SK-MEL-5 (cell line): ENCODE measurements at regions of chr17 and their contacts with region 1.

Region 1: DNA sequence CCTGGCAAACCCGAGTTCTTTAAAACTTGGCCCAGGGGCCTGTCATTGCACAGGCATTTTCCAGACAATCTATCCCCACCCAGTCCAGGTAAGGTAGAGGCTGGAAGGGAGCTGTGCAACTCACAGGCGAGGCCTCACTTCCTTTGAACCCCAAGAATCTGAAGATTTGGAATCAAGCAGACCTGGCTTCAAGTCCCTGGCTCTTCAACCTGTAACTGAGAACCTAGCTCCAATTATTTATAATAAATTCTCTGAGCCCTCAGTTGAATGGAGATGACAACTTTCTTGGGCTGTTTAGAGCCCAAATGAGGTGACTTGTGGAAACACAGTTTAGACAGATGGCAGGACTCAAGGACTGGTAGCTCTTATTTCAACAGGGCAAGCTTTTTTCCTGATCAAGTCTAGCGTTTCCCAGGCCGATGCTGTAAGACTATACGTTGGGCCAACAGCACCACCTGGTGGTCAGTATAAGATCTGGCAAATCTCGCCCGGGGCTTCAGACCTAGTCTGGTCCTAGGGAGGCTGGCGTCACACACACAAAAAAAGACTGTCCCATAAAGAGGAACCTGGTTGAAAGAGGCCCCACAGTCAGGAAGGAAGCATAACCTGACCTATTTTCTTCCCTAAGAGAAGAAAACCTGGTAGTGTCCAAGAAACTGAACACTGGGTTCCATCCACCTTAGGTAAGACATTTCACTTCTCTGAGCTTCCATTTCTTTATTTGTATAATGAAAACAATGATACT is 117.9 kb downstream of the C17orf67 start:
- DNase-seq: peak; percentile 88

Region 2: DNA sequence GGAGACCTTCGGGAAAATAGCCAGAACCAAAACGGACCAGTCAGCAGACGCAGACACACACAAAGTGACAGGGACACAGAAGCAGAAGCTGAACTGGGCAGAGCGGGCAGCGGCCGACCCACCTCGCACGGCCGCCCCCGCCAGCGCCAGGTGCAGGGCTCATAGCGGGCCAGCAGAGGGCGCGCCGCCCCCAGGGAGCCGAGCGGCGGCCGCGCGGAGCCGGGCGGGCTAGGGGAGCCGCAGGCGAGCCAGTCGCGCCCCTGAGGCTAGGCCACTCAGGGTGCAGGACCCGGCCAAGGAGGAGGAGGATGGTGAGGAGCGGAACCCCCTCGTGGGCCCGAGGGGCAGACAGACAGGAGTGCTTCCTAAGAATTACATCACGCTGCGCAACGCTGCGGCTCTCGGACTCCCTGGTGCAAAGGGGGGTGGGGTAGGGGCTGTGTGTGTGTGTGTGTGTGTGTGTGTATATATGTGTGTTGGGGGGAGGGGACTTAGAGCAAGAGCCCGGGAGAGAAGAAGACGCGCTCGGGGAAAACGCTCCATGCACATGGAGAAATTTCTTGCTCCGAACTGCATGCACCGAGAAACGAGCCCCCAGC is 123.2 kb before region 1 on chr17:
- in situ Hi-C with region 1: loop called (anchors 25 kb)
- DNase-seq: peak; percentile 52